Dendritic cell treated with granulocyte-macrophage colony-stimulating factor and Interleukin-4, amounts not matched to agents 40 ng/mL and 50 ng/mL, for 4 days (primary cell): ENCODE measurements at regions of chr11 and their contacts with region 1.

Region 1: GRCh38 chr11:118997627-118998387 is at the start of gene CENATAC:
- H3K4me3 Mint-ChIP-seq: peak within 1 kb of the TSS; percentile 100
- H3K27ac Mint-ChIP-seq: peak within 1 kb of the TSS; percentile 98
- H3K4me1 Mint-ChIP-seq: peaks cover 36% of the 10 kb centered on the region
- H3K27me3 Mint-ChIP-seq: no peaks in the 10 kb centered on the region

Region 2: DNA sequence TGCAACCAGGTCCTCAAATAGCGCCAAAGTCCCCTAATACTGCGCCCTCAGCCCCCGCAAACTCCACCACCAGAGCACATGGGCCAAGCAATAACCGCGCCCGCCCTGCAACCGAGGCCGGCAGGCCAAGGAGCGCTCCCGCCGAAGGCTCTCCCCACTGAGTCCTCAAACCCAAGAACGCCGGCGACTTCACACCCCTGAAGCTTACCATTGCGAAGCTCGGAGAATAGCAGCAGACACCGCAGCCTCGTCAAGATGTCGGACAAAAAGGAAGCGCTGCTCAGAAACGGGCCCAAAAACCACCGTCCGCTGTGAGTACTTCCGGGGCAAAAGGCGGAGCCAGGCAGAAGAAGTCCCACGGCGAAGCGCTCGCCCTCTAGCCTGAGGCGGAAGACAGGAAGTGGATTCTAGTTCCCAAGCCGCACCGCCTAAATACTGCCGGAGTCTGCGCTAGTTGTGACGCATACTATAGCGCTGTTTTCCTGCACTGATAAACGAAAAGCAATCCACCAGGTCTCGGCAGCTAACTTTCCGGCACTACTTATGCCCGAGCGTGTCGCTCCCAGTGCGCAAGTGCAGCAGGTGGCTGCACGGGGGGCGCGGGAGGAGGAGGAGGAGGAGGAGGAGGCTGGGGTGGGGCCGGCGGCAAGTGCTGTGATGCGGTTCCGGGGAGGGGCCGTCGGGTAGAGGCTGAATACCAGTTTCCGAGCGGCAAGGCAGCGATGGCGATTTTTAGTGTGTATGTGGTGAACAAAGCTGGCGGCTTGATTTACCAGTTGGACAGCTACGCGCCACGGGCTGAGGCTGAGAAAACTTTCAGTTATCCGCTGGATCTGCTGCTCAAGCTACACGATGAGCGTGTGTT is 20.5 kb after region 1 on chr11 and contains the starts of genes RPS25 and TRAPPC4:
- intact Hi-C with region 1: loop called (anchors 1 kb)
- H3K4me3 Mint-ChIP-seq: peak within 1 kb of the TSS; percentile 98
- H3K27ac Mint-ChIP-seq: peak within 1 kb of the TSS; percentile 99
- H3K4me1 Mint-ChIP-seq: peaks cover 31% of the 10 kb centered on the region
- H3K27me3 Mint-ChIP-seq: no peaks in the 10 kb centered on the region

Region 3: DNA sequence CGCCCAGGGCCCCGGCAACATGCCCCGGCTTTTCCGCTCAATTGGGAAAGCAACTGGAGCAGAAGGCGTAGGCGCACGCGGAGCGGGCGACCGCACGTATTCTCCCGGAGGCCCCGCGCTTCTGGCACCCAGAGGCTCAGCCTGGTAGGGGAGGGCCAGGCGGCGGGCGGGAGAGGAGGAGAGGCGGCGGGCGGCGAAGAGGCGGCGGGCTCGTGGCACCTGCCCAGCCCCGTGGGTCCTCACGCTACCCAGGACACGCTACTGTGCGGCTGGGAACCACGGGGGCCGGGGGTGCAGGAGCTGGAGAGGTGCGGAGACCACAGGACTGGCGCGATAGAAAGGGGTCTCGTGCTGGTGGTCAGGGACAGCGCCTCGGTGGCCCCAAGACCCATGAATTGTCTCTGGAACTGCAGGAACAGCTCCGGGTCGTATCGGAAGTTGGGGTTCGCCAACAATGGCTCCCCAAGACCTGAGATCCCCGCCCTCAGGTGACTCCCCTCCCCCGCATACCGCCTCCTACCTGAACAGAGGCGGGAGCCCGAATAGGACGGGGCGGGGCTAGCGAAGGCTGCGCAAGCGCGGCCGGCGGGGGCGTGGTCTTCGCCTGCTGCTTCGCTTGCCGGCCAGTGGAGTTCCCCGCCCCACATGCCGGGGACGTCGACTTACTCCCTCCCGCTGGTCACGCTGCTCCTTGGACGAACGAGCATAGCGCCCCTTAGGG is 32.7 kb after region 1 on chr11 and contains the start of gene SLC37A4:
- intact Hi-C with region 1: loop called (anchors 1 kb)
- H3K4me3 Mint-ChIP-seq: peak within 1 kb of the TSS; percentile 86
- H3K27ac Mint-ChIP-seq: peak within 1 kb of the TSS; percentile 90
- H3K4me1 Mint-ChIP-seq: peaks cover 34% of the 10 kb centered on the region
- H3K27me3 Mint-ChIP-seq: peaks cover 2% of the 10 kb centered on the region